ENCODE measurements at regions of chr18 and their contacts with region 1.

Region 1: GRCh38 chr18:63311118-63312018 is 8.2 kb downstream of the BCL2 start:
- DNase-seq: peak; percentile 44
- CTCF ChIP-seq: no peak

Region 2: DNA sequence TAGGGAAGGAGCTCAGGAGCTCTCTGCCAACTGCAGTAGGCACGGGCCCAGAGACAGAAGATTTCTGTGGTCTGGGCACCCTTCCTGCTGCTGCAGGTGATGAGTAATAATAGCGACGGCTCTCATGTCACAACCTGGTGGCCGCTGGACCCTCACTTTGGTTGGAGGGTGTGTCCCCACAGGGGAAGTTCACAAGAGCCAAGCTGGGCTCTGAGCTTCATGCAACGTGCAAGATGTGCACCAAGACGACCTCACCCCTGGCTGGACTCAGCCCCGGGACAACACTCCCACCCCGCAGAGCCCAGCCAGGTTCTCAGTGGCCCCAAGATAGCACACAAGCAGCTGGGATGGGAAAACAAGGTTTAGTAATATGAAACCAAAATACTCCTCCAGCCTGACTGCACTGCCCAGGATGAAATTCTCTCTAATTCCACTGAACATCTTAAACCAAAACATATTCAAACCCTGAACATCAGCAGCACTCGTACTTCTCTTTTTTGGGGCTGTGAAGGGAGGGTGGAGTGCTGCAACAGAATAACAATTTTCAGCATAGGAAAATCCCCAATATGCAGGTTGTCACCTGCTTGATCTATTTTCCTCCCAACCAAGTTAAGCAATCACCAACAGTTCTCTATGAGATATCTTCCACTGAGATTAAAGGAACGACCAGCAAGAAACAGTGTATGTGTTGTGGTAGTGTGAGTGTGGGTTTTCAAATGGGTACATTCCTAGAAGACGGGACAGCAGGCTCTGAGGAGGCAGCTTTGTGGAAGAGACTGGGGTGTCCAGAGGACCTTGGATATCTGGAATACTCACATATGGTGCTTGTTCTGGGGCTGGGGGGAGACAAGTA is 18.3 kb before region 1 on chr18:
- CTCF ChIA-PET with region 1: interaction called, 16 read pairs
- POLR2A ChIA-PET with region 1: no interaction called
- DNase-seq: peak; percentile 48
- CTCF ChIP-seq: no peak

Measured in GM10248 (cell line).